Endothelial cell of umbilical vein (primary cell): ENCODE measurements at regions of chrX and their contacts with region 1.

Region 1: GRCh38 chrX:87517571-87518141 is at the start of gene KLHL4:
- DNase-seq: peak; percentile 92
- H3K4me3 ChIP-seq: peak within 1 kb of the TSS; percentile 49 to 98 (median 82)
- H3K27ac ChIP-seq: peak within 1 kb of the TSS; percentile 97
- H3K4me1 ChIP-seq: peaks cover 17% of the 10 kb centered on the region
- H3K27me3 ChIP-seq: no peaks in the 10 kb centered on the region
- CTCF ChIP-seq: no peak
- POLR2A ChIP-seq: no peak
- total RNA-seq, gene KLHL4: 19.3 and 20.9 TPM in 2 replicates

Region 2: GRCh38 chrX:87078231-87078630 is 439.4 kb before region 1 on chrX:
- CTCF ChIA-PET with region 1: no interaction called
- POLR2A ChIA-PET with region 1: no interaction called
- dilution Hi-C with region 1: no loop called
- intact Hi-C with region 1: no loop called
- DNase-seq: no peak
- H3K4me3 ChIP-seq: no peak overlapping the region
- H3K27ac ChIP-seq: no peak overlapping the region
- H3K4me1 ChIP-seq: no peaks in the 10 kb centered on the region
- H3K27me3 ChIP-seq: no peaks in the 10 kb centered on the region
- CTCF ChIP-seq: no peak
- POLR2A ChIP-seq: no peak

Region 3: GRCh38 chrX:87167841-87168240 is 349.8 kb before region 1 on chrX:
- CTCF ChIA-PET with region 1: no interaction called
- POLR2A ChIA-PET with region 1: no interaction called
- dilution Hi-C with region 1: no loop called
- intact Hi-C with region 1: no loop called
- DNase-seq: no peak
- H3K4me3 ChIP-seq: no peak overlapping the region
- H3K27ac ChIP-seq: no peak overlapping the region
- H3K4me1 ChIP-seq: no peaks in the 10 kb centered on the region
- H3K27me3 ChIP-seq: no peaks in the 10 kb centered on the region
- CTCF ChIP-seq: no peak
- POLR2A ChIP-seq: no peak

Region 4: DNA sequence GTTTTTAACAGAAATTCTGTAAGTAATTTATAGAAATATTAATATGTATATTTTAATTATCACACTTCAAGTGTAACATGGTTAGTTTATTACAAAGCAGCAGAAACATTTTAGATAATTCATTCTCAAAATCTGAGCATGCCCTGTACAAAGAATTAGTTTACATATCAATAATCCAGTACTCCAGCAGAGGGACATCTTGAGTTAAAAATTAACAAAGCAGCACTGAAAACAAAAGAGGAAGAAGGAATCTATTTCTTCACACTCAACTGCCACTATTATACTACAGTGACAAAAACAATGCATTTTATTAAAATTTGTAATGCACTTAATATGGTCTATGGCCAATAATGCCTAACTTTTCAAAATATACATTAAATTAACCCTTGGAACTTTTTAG is 179.1 kb before region 1 on chrX:
- CTCF ChIA-PET with region 1: interaction called, 7 read pairs
- POLR2A ChIA-PET with region 1: no interaction called
- dilution Hi-C with region 1: no loop called
- intact Hi-C with region 1: loop called (anchors 2 kb)
- DNase-seq: peak; percentile 50
- H3K4me3 ChIP-seq: no peak overlapping the region
- H3K27ac ChIP-seq: no peak overlapping the region
- H3K4me1 ChIP-seq: no peaks in the 10 kb centered on the region
- H3K27me3 ChIP-seq: no peaks in the 10 kb centered on the region
- CTCF ChIP-seq: no peak
- POLR2A ChIP-seq: no peak

Region 5: DNA sequence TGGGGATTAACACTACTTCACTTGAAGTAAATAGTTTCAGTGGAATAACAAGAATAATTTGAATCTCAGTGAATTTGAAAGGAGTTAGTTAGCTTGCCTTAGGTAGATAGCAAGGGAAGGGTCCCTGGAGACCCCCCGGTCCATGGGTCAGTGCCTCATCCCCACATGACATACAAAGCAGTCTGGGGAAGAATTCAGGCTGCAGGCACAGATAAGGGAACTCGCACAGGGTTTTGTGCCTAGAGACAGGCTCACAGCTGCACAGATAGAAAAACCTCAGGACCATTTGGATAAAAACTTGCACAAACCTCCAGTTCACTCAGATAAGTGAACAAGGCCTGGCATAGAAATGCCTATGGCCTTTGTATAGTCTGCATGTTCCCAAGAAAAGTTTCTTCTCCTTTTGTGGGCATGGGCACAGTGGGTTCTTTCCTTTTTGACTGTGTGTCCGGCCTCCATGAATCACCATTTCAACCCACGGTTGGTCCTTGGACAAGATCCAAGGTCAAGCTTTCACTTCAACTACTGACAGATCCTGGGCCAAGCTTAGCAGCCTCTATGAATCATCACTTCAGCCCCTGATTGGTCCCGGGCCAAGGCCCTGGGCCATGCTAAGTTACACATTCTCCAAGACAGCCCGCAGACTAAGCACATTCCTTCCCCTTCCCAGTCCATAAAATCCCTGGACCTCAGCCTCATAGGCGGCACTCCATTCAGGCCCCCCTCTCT is 108.4 kb before region 1 on chrX:
- CTCF ChIA-PET with region 1: interaction called, 3 read pairs
- POLR2A ChIA-PET with region 1: interaction called, 3 read pairs
- dilution Hi-C with region 1: no loop called
- intact Hi-C with region 1: loop called (anchors 1 kb)
- DNase-seq: peak; percentile 96
- H3K4me3 ChIP-seq: no peak overlapping the region
- H3K27ac ChIP-seq: peak overlapping the region; percentile 50
- H3K4me1 ChIP-seq: peaks cover 7% of the 10 kb centered on the region
- H3K27me3 ChIP-seq: no peaks in the 10 kb centered on the region
- CTCF ChIP-seq: no peak
- POLR2A ChIP-seq: no peak

Region 6: DNA sequence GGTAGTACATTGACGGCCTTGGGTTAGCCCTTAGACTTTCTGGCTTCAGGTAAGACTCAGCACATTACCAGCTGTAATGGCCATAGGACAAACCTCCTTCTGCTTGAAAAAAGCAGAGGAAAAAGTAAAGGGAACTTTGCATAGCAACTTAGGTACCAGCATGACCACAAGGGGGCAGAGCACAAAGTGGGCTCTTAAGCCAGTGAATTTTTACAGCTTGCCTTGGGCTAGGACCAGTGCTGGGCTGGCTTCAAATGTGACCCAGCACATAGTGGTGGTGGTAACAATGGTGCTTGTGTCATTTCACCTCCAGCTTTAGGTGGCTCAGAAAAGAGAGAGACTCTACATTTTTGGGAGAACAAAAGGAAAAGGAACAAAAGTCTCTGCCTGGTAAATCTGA is 66.0 kb after region 1 on chrX:
- CTCF ChIA-PET with region 1: interaction called, 3 read pairs
- POLR2A ChIA-PET with region 1: no interaction called
- dilution Hi-C with region 1: no loop called
- intact Hi-C with region 1: loop called (anchors 2 kb)
- DNase-seq: peak; percentile 33
- H3K4me3 ChIP-seq: no peak overlapping the region
- H3K27ac ChIP-seq: no peak overlapping the region
- H3K4me1 ChIP-seq: no peaks in the 10 kb centered on the region
- H3K27me3 ChIP-seq: no peaks in the 10 kb centered on the region
- CTCF ChIP-seq: peak; percentile 42 to 47
- POLR2A ChIP-seq: no peak

Region 7: GRCh38 chrX:87664381-87664780 is 146.7 kb after region 1 on chrX:
- CTCF ChIA-PET with region 1: no interaction called
- POLR2A ChIA-PET with region 1: no interaction called
- dilution Hi-C with region 1: no loop called
- intact Hi-C with region 1: loop called (anchors 2 kb)
- DNase-seq: peak; percentile 64
- H3K4me3 ChIP-seq: no peak overlapping the region
- H3K27ac ChIP-seq: no peak overlapping the region
- H3K4me1 ChIP-seq: peaks cover 6% of the 10 kb centered on the region
- H3K27me3 ChIP-seq: no peaks in the 10 kb centered on the region
- CTCF ChIP-seq: no peak
- POLR2A ChIP-seq: no peak